GM12878 (cell line): ENCODE measurements at regions of chr9 and their contacts with region 1.

Region 1: DNA sequence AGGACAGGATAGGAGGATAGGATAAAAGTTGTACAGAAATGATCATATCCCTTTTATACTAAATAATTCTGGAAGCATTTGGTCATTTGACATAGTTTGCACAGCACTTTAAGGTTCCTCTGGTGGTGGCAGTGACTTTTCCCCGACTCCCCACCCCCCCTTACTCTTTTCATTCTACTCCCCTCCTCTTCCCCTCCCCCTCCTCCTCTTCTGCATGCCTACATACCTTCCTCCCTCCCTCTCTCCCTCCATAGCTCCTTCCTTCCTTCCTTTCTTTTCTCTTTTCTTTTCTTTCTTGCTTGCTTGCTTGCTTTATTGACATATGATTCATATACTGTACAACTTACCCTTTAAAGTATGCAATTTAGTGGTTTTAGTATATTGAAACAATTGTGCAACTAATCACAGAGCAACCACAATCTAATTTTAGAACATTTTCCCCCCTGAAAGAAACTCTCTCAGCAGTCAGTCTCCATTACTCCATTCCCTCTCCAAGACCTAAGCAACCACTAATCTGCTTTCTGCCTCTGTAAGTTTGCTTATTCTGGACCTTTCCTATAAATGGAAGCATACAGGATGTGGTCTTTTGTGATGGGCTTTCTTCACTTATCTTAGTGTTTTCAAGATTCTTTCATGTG is 159.0 kb downstream of the HACD4 start:
- DNase-seq: no peak
- ATAC-seq: peak; percentile 18; the same call in 1 of the 3 replicates
- H3K4me3 ChIP-seq: no peak overlapping the region
- H3K27ac ChIP-seq: no peak overlapping the region
- H3K4me1 ChIP-seq: peaks cover 12% of the 10 kb centered on the region
- H3K27me3 ChIP-seq: no peaks in the 10 kb centered on the region
- CTCF ChIP-seq: no peak
- EP300 ChIP-seq: no peak
- POLR2A ChIP-seq: no peak
- RAD21 ChIP-seq: no peak

Region 2: DNA sequence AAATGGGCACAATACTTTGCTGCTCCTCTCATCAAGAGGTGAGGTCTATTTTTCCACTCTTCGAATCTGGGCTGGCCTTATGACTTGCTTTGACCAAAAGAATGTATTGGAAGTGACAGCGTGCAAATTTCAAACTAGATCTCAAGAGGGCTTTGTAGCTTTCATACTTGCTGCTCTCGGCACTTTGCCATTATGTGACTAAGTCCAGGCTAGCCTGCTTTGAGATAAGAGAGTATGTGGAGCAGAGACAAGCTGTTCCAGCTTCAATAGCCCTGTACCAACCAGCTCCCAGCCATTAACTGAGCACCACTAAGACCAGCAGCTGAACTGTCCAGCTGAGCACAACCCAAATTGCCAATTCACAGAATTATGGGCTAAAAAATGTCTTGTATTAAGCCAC is 1339.1 kb before region 1 on chr9:
- CTCF ChIA-PET with region 1: no interaction called
- POLR2A ChIA-PET with region 1: no interaction called
- RAD21 ChIA-PET with region 1: no interaction called
- SMC1A ChIA-PET with region 1: no interaction called
- in situ Hi-C with region 1: no loop called
- intact Hi-C with region 1: no loop called
- DNase-seq: no peak
- ATAC-seq: no peak
- H3K4me3 ChIP-seq: no peak overlapping the region
- H3K27ac ChIP-seq: no peak overlapping the region
- H3K4me1 ChIP-seq: no peaks in the 10 kb centered on the region
- H3K27me3 ChIP-seq: no peaks in the 10 kb centered on the region; a peak in 1 of 4 replicates
- CTCF ChIP-seq: no peak
- EP300 ChIP-seq: no peak
- POLR2A ChIP-seq: no peak
- RAD21 ChIP-seq: no peak

Region 3: GRCh38 chr9:20854444-20854843 is 18.0 kb before region 1 on chr9:
- CTCF ChIA-PET with region 1: no interaction called
- POLR2A ChIA-PET with region 1: no interaction called
- RAD21 ChIA-PET with region 1: no interaction called
- SMC1A ChIA-PET with region 1: interaction called, 10 read pairs
- in situ Hi-C with region 1: no loop called
- intact Hi-C with region 1: no loop called
- DNase-seq: no peak
- ATAC-seq: no peak
- H3K4me3 ChIP-seq: no peak overlapping the region
- H3K27ac ChIP-seq: no peak overlapping the region
- H3K4me1 ChIP-seq: no peaks in the 10 kb centered on the region
- H3K27me3 ChIP-seq: no peaks in the 10 kb centered on the region
- CTCF ChIP-seq: no peak
- EP300 ChIP-seq: no peak
- POLR2A ChIP-seq: no peak
- RAD21 ChIP-seq: no peak